Activated B cell treated with CpG ODN at 0.5 μM for 24 hours (primary cell): ENCODE measurements at regions of chrX and their contacts with region 1.

Region 1: DNA sequence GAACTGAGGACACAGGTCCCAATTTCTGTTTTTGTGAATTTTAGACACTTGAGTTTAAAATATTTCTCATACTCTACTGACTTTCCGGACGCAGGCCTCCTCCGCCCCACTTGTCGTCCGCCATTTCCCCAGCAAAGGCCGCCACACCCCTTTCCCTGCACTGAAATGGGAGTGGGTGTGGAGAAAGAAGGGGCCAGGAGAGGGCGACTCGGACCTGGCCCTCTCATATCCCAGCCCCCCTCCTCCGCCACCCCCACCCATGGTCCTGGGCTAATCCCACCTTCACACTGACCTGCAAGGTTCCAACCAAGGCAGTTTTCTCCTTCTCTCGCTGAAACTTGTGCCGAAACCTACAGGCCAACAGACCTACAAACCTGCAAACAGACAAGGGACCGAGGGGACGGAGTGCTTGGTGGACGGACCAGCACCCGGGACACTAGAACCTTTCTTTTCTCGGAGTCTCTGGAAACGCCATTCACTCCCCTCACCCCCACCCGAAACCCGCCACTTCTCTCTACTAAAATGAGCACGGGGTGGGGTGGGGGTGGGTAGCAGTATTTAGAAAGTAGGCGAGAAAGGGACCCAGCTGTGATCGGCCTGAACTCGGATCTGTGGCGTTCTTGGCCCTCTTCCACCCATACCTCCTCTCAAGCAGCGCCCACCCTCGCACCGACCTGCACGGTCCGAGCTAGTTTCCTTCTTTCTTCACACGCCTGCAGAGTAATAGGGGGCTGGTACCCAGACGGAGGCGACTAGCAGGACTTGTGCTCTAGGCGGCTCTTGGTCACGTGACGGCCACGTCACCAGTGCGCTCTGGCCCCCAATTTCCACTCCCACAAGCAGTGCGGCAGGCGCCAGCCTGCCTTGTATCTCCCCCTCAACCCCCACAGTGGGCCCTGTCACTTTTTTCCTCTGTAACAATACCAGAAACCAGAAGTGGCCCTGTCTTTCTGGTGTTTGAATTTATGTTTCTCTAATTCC is at the start of gene ARMCX6:
- DNase-seq: peak; percentile 60
- ATAC-seq: peak; percentile 86
- H3K4me3 Mint-ChIP-seq: peak within 1 kb of the TSS; percentile 91
- H3K27ac Mint-ChIP-seq: peak within 1 kb of the TSS; percentile 91
- H3K4me1 Mint-ChIP-seq: peaks cover 4% of the 10 kb centered on the region
- H3K27me3 Mint-ChIP-seq: no peaks in the 10 kb centered on the region
- CTCF ChIP-seq: no peak
- total RNA-seq, gene ARMCX6: 45.1 and 50.5 TPM in 2 replicates

Region 2: GRCh38 chrX:101759000-101759399 is 141.5 kb after region 1 on chrX:
- CTCF ChIA-PET with region 1: no interaction called
- POLR2A ChIA-PET with region 1: no interaction called
- intact Hi-C with region 1: loop called (anchors 5 kb)
- DNase-seq: no peak
- ATAC-seq: peak; percentile 62
- H3K4me3 Mint-ChIP-seq: no peak overlapping the region
- H3K27ac Mint-ChIP-seq: no peak overlapping the region
- H3K4me1 Mint-ChIP-seq: no peaks in the 10 kb centered on the region
- H3K27me3 Mint-ChIP-seq: peaks cover 7% of the 10 kb centered on the region
- CTCF ChIP-seq: no peak

Region 3: DNA sequence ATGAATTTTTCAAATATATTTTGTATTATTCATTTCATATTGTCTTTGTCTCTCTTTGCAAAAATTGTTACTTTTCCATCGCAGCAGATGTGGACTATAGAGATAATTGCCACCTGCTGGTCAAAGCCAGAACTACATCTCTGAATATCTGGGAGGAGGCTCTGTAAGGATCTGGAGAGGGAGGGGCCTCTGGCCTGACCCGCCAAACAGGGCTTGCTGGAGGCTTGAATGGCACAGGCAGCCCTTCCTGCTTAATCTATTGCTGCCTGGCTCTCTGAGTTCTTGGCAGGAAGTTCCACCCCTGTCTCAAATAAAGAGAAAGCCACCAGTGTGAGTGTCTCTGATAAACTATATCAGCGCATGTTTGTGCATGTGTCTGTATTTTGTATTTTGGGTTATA is 181.9 kb after region 1 on chrX:
- CTCF ChIA-PET with region 1: no interaction called
- POLR2A ChIA-PET with region 1: no interaction called
- intact Hi-C with region 1: loop called (anchors 5 kb)
- DNase-seq: peak; percentile 21
- ATAC-seq: peak; percentile 100
- H3K4me3 Mint-ChIP-seq: peak overlapping the region; percentile 50
- H3K27ac Mint-ChIP-seq: no peak overlapping the region
- H3K4me1 Mint-ChIP-seq: no peaks in the 10 kb centered on the region
- H3K27me3 Mint-ChIP-seq: peaks cover 1% of the 10 kb centered on the region
- CTCF ChIP-seq: peak; percentile 27

Region 4: DNA sequence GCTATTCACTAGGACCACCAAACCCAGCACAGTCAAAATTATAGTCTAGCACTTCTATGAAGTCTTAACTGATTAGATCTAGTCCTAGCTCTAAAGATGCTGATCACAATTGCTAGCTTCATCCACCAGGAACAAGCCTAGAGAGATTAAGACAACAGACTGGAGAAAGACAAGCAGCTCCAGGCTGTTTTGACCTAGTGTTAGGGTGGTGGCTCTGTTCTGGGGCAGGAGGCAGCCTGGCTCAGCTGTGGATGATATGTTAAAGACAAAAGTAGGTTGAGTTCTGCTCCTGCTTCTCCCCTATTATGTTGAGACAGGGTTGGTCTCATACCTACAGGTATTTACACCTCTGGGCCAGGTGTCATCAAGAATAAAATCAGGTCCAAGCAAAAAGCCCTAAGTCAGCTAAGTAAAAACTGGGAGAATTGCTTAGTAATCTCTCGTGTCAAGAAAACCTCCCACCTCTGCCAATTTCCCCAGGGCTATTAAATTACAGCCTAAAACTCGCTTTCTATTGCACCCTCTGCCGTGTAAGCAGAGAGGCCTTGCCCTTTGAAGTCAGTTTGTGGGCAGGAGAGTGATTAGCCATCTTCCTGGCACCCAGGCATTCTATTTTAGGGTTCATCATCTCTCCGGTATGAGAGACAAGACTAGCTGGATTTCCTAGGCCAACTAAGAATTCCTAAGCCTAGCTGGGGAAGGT is 1359.4 kb after region 1 on chrX:
- CTCF ChIA-PET with region 1: no interaction called
- POLR2A ChIA-PET with region 1: no interaction called
- intact Hi-C with region 1: no loop called
- DNase-seq: no peak
- ATAC-seq: no peak
- H3K4me3 Mint-ChIP-seq: no peak overlapping the region
- H3K27ac Mint-ChIP-seq: no peak overlapping the region
- H3K4me1 Mint-ChIP-seq: no peaks in the 10 kb centered on the region
- H3K27me3 Mint-ChIP-seq: no peaks in the 10 kb centered on the region
- CTCF ChIP-seq: no peak